ENCODE measurements at regions of chr22 and their contacts with region 1.

Region 1: DNA sequence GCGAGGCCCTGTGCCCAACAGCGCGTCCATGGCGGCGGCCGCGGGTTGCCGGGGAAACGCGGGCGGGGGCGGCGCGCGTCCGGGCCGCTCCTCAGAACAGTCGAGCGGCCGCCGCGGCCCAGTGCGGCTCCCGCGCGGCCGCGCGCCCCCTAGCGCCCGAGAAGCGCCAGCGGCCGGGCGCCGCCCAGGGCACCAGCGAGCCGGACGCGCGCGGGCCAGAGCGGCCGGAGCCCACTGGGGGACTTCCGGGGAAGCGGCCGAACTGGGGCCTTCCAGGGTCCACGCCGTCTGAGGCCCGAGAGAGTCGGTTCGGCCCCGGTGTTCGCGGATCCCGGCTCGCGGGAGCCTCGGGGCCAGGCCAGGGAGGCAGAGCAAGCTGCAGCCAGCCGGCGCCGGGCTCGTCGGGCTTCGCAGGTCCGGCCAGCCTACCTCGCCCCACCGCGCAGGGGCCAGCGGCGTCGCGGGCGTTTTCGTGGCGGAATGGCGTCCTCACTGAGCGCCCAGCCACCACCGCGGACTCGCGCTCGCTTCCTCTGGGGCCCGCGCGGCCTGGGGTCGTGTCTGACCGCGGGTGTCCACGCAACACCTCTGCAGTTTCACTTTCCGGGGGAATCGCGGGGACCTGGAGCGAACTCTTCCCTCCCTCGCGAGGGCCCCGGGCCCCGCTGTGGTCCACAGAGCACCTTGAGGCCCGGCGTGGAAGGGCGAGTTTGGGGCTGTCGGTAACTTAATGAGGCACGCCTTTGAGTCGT is at the start of gene DENND6B:
- H3K4me3 ChIP-seq: peak within 1 kb of the TSS; percentile 66
- H3K27ac ChIP-seq: peak within 1 kb of the TSS; percentile 85
- H3K4me1 ChIP-seq: no peaks in the 10 kb centered on the region
- CTCF ChIP-seq: no peak

Region 2: DNA sequence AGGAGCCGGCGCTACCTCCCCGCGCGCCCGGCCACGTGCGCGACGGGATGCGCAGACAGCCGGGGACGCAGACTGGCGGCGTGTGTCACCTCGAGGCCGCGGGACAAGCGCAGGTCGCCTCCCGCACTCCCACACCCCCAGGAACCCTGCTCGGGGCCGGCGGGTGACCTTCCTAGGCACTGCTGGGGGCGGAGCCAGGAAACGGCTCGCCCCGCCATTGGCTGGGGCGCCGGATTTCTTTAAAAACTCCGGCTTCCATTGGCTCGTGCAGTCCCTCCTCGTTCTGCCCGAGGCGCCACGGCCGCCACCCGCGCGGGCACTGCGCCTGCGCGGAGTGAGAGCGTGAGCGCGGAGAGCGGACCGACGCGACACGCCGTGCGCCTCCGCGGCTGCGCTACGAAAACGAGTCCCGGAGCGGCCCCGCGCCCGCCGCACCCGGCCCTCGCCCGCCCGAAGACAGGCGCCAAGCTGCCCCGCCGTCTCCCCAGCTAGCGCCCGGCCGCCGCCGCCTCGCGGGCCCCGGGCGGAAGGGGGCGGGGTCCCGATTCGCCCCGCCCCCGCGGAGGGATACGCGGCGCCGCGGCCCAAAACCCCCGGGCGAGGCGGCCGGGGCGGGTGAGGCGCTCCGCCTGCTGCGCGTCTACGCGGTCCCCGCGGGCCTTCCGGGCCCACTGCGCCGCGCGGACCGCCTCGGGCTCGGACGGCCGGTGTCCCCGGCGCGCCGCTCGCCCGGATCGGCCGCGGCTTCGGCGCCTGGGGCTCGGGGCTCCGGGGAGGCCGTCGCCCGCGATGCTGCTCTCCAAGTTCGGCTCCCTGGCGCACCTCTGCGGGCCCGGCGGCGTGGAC is 366.8 kb before region 1 on chr22 and contains the start of gene PIM3:
- CTCF ChIA-PET with region 1: no interaction called
- POLR2A ChIA-PET with region 1: interaction called, 12 read pairs
- H3K4me3 ChIP-seq: peak within 1 kb of the TSS; percentile 83
- H3K27ac ChIP-seq: peak within 1 kb of the TSS; percentile 99
- H3K4me1 ChIP-seq: peaks cover 12% of the 10 kb centered on the region
- CTCF ChIP-seq: no peak

Region 3: GRCh38 chr22:50182176-50183081 is 144.7 kb before region 1 on chr22:
- CTCF ChIA-PET with region 1: no interaction called
- POLR2A ChIA-PET with region 1: no interaction called
- H3K4me3 ChIP-seq: no peak overlapping the region
- H3K27ac ChIP-seq: no peak overlapping the region
- H3K4me1 ChIP-seq: peaks cover 4% of the 10 kb centered on the region; the same call in 1 of the 2 replicates
- CTCF ChIP-seq: no peak

Region 4: GRCh38 chr22:50314455-50315288 is 12.5 kb before region 1 on chr22:
- CTCF ChIA-PET with region 1: interaction called, 10 read pairs
- POLR2A ChIA-PET with region 1: interaction called, 3 read pairs
- H3K4me3 ChIP-seq: no peak overlapping the region
- H3K27ac ChIP-seq: no peak overlapping the region
- H3K4me1 ChIP-seq: no peaks in the 10 kb centered on the region
- CTCF ChIP-seq: no peak

Region 5: DNA sequence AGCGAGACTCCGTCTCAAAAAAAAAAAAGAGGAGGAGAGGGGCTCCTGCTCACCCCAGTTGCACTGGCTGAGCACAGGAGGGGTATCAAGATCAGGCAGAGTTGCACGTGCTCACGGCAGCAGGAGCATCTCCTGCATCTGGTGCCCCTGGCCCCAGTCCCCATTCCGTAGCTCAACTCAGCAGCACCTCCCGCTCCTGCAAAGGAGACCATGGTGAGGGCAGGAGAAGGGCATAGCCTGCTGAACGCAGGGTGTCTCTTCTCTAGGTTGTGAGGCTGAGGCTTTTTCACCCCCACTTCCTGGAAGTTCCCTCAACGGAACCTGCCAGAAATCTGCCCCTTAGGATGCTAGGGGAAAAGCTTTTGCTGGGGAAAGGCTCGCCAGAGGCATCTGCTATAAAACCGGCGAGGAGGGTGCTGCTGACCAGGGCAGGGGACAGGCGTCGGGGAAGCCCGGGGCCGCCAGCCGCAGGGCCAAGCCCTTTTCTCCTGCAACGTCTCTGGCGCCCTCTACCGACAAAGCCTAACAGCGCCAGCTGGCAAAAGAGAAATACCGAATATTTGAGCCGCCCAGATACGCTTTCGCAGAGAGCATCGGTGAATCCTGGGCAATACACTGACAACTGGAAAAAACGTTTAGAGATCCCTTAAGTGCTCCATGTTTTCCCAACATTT is 15.0 kb after region 1 on chr22:
- CTCF ChIA-PET with region 1: interaction called, 36 read pairs
- POLR2A ChIA-PET with region 1: interaction called, 4 read pairs
- H3K4me3 ChIP-seq: peak overlapping the region; percentile 33
- H3K27ac ChIP-seq: peak overlapping the region; percentile 95
- H3K4me1 ChIP-seq: no peaks in the 10 kb centered on the region
- CTCF ChIP-seq: peak; percentile 97

Measured in HEK293 (cell line).